ENCODE measurements at regions of chr21 and their contacts with region 1.

Region 1: GRCh38 chr21:42145569-42146272 is 73.2 kb upstream of the ABCG1 start:
- DNase-seq: peak; percentile 67 to 72 (median 70)
- H3K4me3 ChIP-seq: no peak overlapping the region
- H3K4me3 Mint-ChIP-seq: peak overlapping the region in 1 of 8 donors; percentile 13
- H3K27ac ChIP-seq: no peak overlapping the region
- H3K27ac Mint-ChIP-seq: peak overlapping the region; percentile 28 to 89 (median 51)
- H3K4me1 ChIP-seq: peaks cover 4% of the 10 kb centered on the region
- H3K4me1 Mint-ChIP-seq: peaks cover 4 to 7% (median 5%) of the 10 kb centered on the region in 4 donors
- H3K27me3 ChIP-seq: no peaks in the 10 kb centered on the region
- H3K27me3 Mint-ChIP-seq: peaks cover 5 to 7% of the 10 kb centered on the region in 2 donors

Region 2: DNA sequence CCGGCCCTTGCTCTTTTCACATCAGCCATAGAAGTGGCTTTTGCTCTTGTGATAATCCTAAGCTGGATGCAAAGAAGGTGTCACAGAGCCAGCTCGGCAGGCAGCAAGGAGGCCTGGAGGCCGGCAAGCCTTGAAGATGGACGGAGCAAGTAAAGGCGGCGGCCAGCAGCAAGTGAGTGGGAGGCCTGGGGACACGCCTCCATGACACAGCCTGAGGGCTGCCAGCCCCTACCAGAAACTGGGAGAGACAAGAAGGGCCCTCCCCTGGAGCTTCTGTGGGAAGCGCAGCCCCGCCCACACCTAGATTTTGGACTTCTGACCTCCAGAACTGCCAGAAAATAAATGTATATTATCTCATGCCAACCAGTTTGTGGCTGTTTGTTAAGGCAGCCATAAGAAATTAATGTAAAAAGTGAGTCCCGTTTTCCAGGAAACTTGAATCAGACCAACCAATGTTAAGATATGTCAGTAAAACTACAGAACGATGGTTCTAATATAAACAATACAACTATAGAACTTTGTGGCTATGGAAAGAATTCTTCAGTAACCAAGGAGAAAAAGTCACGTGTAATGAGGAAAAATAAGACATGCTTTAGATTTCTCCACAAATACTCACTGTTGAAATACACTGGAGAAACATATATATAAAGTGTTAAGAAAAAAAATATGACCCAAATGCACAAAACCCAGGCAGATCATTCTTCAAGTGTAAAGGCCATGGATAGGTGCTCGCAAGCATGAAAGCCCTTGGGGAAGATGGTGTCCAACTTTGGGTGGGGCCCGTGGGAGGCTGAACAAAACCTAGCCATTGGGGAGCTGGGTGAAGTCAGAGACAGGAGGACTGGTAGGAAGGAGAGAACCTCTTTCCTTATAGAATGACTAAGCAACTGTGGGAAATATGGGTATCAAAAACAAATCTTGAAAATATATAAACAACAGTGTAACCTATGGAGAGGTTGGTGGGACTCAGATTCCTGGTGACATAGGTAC is 927.8 kb before region 1 on chr21:
- CTCF ChIA-PET with region 1: no interaction called
- POLR2A ChIA-PET with region 1: no interaction called
- intact Hi-C with region 1: no loop called
- DNase-seq: no peak
- H3K4me3 ChIP-seq: no peak overlapping the region
- H3K4me3 Mint-ChIP-seq: no peak overlapping the region
- H3K27ac ChIP-seq: no peak overlapping the region
- H3K27ac Mint-ChIP-seq: no peak overlapping the region
- H3K4me1 ChIP-seq: no peaks in the 10 kb centered on the region
- H3K4me1 Mint-ChIP-seq: peaks cover 0 to 1% (median 0%) of the 10 kb centered on the region in 4 donors
- H3K27me3 ChIP-seq: no peaks in the 10 kb centered on the region
- H3K27me3 Mint-ChIP-seq: peaks cover 6% of the 10 kb centered on the region in 2 donors

Region 3: DNA sequence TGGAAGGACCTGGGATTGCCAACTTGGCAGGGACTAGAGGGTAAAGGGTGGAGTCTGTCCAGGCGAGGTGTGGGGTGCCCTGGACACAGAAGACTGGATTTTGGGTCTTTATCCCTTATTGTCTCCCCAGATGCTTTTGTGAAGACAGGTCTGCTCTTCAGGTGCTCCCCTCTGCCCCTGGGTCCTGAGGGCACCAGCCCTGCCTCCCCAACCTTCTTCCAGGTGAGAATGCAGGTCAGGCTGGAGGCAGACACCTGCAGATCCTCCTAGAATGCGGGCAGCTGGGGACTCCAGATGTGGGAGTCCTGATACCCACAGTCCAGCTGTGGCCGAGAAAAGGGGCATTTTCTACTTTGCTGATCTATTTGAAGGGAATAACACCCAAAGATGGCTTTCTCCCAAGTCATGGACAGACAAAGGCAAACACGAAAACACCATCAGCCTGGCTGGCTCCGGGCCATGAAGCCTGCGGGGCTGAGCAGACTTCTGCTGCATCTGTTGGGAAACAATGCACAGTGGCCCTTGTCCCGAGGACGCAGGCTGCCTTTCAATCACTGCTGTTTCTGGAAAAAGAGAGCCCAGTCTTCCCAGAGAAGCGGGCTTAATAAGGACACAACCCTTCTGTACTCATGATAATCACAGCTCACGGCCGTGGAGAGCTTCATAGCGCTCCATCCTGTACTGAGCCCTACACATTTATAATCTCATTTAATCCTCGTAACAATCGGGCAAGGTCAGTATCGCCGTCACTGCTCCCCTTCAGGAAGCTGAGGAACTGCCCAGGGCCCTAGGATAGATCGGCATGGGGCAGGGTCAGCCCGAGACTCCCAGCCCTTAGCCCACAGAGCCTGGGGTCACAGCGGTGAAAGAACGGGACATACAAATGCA is 11.2 kb after region 1 on chr21:
- CTCF ChIA-PET with region 1: interaction called, 25 read pairs
- POLR2A ChIA-PET with region 1: no interaction called
- intact Hi-C with region 1: no loop called
- DNase-seq: no peak
- H3K4me3 ChIP-seq: no peak overlapping the region
- H3K4me3 Mint-ChIP-seq: no peak overlapping the region
- H3K27ac ChIP-seq: no peak overlapping the region
- H3K27ac Mint-ChIP-seq: no peak overlapping the region
- H3K4me1 ChIP-seq: peaks cover 7% of the 10 kb centered on the region
- H3K4me1 Mint-ChIP-seq: peaks cover 6 to 14% (median 11%) of the 10 kb centered on the region in 4 donors
- H3K27me3 ChIP-seq: no peaks in the 10 kb centered on the region
- H3K27me3 Mint-ChIP-seq: peaks cover 0 to 4% of the 10 kb centered on the region in 2 donors

Region 4: DNA sequence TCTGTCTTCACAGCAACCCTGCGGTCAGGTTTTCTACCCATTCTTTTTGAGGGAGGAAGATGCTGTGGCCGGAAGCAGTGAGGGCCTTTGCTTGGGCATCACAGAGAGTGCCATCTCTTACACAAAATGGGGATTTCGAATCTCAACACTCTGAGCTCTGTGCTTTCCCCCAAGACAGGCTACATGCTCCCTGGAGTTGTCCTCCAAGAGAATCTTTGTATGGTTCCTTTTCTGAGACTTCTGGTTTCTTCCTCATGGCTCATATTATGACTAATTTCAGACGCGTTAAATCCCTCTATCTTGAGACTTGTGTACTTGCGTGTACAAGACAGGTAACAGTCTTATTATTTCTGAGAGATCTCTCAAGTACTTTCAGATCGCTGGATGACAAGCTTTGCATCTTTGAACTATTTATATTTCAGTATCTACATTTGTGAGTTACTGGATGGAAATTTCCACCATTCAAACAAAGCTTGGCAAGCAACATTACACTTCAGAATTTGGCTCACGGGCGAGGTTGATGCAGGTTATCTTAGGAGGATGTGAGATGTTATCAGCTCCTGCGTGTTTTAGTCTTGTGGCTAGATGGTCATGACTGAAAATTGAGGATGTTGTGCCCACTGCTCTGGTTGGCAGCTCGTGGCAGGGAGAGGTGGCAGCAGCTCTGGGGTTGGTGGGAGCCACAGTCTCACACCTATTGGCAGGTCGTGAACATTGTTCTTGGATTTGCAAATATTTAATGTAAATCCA is 92.6 kb after region 1 on chr21:
- CTCF ChIA-PET with region 1: interaction called, 26 read pairs
- POLR2A ChIA-PET with region 1: interaction called, 7 read pairs
- intact Hi-C with region 1: no loop called
- DNase-seq: peak; percentile 77 to 89 (median 83)
- H3K4me3 ChIP-seq: peak overlapping the region in 1 of 2 donors; percentile 44
- H3K4me3 Mint-ChIP-seq: peak overlapping the region; percentile 49 to 88 (median 75)
- H3K27ac ChIP-seq: peak overlapping the region; percentile 96
- H3K27ac Mint-ChIP-seq: peak overlapping the region; percentile 88 to 99 (median 96)
- H3K4me1 ChIP-seq: peaks cover 66% of the 10 kb centered on the region
- H3K4me1 Mint-ChIP-seq: peaks cover 50 to 86% (median 59%) of the 10 kb centered on the region in 4 donors
- H3K27me3 ChIP-seq: no peaks in the 10 kb centered on the region
- H3K27me3 Mint-ChIP-seq: no peaks in the 10 kb centered on the region